IMR-90 (cell line): ENCODE measurements at regions of chrX and their contacts with region 1.

Region 1: DNA sequence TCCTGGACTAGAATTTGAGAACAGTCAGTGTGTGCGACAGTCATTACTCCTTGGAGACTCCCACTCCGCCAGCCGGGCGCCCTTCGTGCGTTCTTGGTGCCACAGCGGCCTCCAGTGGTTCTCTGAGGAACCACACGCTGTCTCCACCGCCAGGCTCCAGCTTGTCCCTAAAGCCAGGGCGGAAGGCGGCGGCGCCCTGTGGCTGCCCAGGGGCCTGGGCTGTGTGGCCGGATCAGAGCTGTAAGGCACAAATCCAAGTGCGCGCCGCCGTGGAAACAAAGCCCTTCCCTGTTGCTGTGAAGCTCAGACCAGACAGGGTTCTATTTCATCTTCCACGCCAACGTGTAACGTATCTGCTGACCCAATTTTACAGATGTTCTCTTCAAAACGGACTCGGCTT is 34.2 kb downstream of the IDS start:
- DNase-seq: peak; percentile 44
- ATAC-seq: peak; percentile 99
- H3K4me3 ChIP-seq: no peak overlapping the region
- H3K27ac ChIP-seq: no peak overlapping the region
- H3K4me1 ChIP-seq: no peaks in the 10 kb centered on the region
- H3K27me3 ChIP-seq: no peaks in the 10 kb centered on the region; the same call in 1 of the 2 replicates
- CTCF ChIP-seq: peak; percentile 83
- POLR2A ChIP-seq: no peak
- RAD21 ChIP-seq: peak; percentile 85

Region 2: GRCh38 chrX:148049441-148049840 is 1421.5 kb before region 1 on chrX:
- CTCF ChIA-PET with region 1: interaction called, 5 read pairs
- POLR2A ChIA-PET with region 1: no interaction called
- dilution Hi-C with region 1: no loop called
- in situ Hi-C with region 1: loop called (anchors 10 kb)
- intact Hi-C with region 1: loop called (anchors 1 kb)
- DNase-seq: peak; percentile 18
- ATAC-seq: no peak
- H3K4me3 ChIP-seq: no peak overlapping the region
- H3K27ac ChIP-seq: no peak overlapping the region
- H3K4me1 ChIP-seq: no peaks in the 10 kb centered on the region
- H3K27me3 ChIP-seq: no peaks in the 10 kb centered on the region
- CTCF ChIP-seq: peak; percentile 63
- POLR2A ChIP-seq: no peak
- RAD21 ChIP-seq: peak; percentile 62

Region 3: GRCh38 chrX:148530464-148531077 is 940.4 kb before region 1 on chrX:
- CTCF ChIA-PET with region 1: interaction called, 6 read pairs
- POLR2A ChIA-PET with region 1: no interaction called
- dilution Hi-C with region 1: no loop called
- in situ Hi-C with region 1: no loop called
- intact Hi-C with region 1: loop called (anchors 5 kb)
- DNase-seq: peak; percentile 33
- ATAC-seq: peak; percentile 42; the same call in 1 of the 2 replicates
- H3K4me3 ChIP-seq: no peak overlapping the region
- H3K27ac ChIP-seq: no peak overlapping the region
- H3K4me1 ChIP-seq: no peaks in the 10 kb centered on the region
- H3K27me3 ChIP-seq: no peaks in the 10 kb centered on the region
- CTCF ChIP-seq: peak; percentile 59
- POLR2A ChIP-seq: no peak
- RAD21 ChIP-seq: peak; percentile 31

Region 4: DNA sequence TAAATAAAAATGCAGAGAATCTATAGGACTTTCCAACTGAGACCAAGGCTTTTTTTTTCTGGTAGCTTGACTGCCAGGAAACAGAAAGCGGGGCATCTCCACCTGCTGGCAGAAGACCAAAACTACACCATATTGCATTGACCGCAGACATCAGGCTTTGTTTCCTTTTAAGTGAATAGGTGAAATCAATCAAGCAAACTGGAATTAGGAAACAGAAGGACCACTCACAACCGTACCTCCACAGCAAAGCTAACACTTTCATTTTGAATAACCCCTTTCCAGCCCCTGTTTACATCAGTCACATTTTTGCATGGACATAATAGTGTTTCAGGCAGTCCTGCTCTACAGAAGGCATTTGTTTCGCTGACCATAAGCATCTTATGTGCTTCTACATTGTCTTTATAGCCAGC is 184.0 kb before region 1 on chrX:
- CTCF ChIA-PET with region 1: no interaction called
- POLR2A ChIA-PET with region 1: no interaction called
- dilution Hi-C with region 1: no loop called
- in situ Hi-C with region 1: no loop called
- intact Hi-C with region 1: loop called (anchors 5 kb)
- DNase-seq: peak; percentile 31
- ATAC-seq: peak; percentile 53
- H3K4me3 ChIP-seq: no peak overlapping the region
- H3K27ac ChIP-seq: no peak overlapping the region
- H3K4me1 ChIP-seq: no peaks in the 10 kb centered on the region
- H3K27me3 ChIP-seq: no peaks in the 10 kb centered on the region
- CTCF ChIP-seq: peak; percentile 63
- POLR2A ChIP-seq: no peak
- RAD21 ChIP-seq: peak; percentile 67

Region 5: GRCh38 chrX:149495573-149496071 is 24.7 kb after region 1 on chrX:
- CTCF ChIA-PET with region 1: no interaction called
- POLR2A ChIA-PET with region 1: interaction called, 19 read pairs
- dilution Hi-C with region 1: no loop called
- in situ Hi-C with region 1: no loop called
- intact Hi-C with region 1: no loop called
- DNase-seq: peak; percentile 69
- ATAC-seq: peak; percentile 70
- H3K4me3 ChIP-seq: no peak overlapping the region
- H3K27ac ChIP-seq: no peak overlapping the region
- H3K4me1 ChIP-seq: no peaks in the 10 kb centered on the region
- H3K27me3 ChIP-seq: no peaks in the 10 kb centered on the region
- CTCF ChIP-seq: no peak
- POLR2A ChIP-seq: no peak
- RAD21 ChIP-seq: no peak

Region 6: GRCh38 chrX:149527705-149528104 is 56.8 kb after region 1 on chrX:
- CTCF ChIA-PET with region 1: no interaction called
- POLR2A ChIA-PET with region 1: no interaction called
- dilution Hi-C with region 1: no loop called
- in situ Hi-C with region 1: no loop called
- intact Hi-C with region 1: no loop called
- DNase-seq: peak; percentile 28
- ATAC-seq: peak; percentile 53
- H3K4me3 ChIP-seq: no peak overlapping the region
- H3K27ac ChIP-seq: no peak overlapping the region
- H3K4me1 ChIP-seq: no peaks in the 10 kb centered on the region; the same call in 1 of the 2 replicates
- H3K27me3 ChIP-seq: peaks cover 2% of the 10 kb centered on the region; the same call in 1 of the 2 replicates
- CTCF ChIP-seq: peak; percentile 50
- POLR2A ChIP-seq: no peak
- RAD21 ChIP-seq: peak; percentile 30